IMR-90 (cell line): ENCODE measurements at regions of chr14 and their contacts with region 1.

Region 1: GRCh38 chr14:46820291-46820690 is 168.7 kb upstream of the RPL10L start:
- DNase-seq: no peak
- ATAC-seq: no peak
- H3K4me3 ChIP-seq: no peak overlapping the region
- H3K27ac ChIP-seq: no peak overlapping the region
- H3K4me1 ChIP-seq: no peaks in the 10 kb centered on the region
- H3K27me3 ChIP-seq: no peaks in the 10 kb centered on the region
- CTCF ChIP-seq: no peak
- POLR2A ChIP-seq: no peak
- RAD21 ChIP-seq: no peak

Region 2: DNA sequence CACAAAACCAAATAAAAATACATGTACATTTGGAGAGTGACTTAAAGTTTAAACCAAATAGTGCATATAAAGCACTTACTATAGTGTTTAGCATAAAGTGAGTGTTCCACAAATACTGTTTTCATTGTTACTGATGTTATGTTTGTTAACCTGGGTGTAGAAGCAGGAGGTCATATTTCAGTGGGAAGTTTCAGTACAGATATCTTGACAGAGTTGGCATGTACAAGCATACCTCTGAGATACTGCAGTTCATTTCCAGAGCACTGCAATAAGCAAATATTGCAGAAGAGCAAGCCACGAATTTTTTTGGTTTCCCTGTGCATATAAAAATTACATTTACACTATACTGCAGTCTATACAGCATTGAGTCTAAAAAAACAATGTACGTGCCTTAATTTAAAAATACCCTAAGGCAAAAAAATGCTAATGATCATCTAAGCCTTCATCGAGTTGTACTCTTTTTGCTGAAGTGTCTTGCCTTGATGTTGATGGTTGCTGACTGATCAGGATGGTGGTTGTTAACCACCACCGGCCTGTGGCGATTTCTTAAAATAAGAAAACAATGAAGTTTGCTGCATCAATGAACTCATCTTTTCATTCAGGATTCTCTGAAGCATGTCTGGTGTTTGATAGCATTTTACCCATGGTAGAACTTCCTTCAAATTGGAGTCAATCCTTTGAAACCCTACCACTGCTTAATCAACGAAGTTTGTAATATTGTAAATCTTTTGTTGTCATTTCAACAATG is 192.4 kb after region 1 on chr14:
- CTCF ChIA-PET with region 1: no interaction called
- POLR2A ChIA-PET with region 1: interaction called, 14 read pairs
- dilution Hi-C with region 1: no loop called
- in situ Hi-C with region 1: no loop called
- intact Hi-C with region 1: no loop called
- DNase-seq: no peak
- ATAC-seq: no peak
- H3K4me3 ChIP-seq: no peak overlapping the region
- H3K27ac ChIP-seq: no peak overlapping the region
- H3K4me1 ChIP-seq: no peaks in the 10 kb centered on the region
- H3K27me3 ChIP-seq: no peaks in the 10 kb centered on the region
- CTCF ChIP-seq: no peak
- POLR2A ChIP-seq: no peak
- RAD21 ChIP-seq: no peak